ENCODE measurements at regions of chr9 and their contacts with region 1.

Region 1: GRCh38 chr9:113401027-113401792 is at the start of gene ALAD:
- DNase-seq: peak; percentile 100
- ATAC-seq: peak; percentile 99
- H3K4me3 Mint-ChIP-seq: peak within 1 kb of the TSS; percentile 86
- H3K27ac Mint-ChIP-seq: peak within 1 kb of the TSS; percentile 84
- H3K4me1 Mint-ChIP-seq: peaks cover 19% of the 10 kb centered on the region
- H3K27me3 Mint-ChIP-seq: no peaks in the 10 kb centered on the region
- total RNA-seq, gene ALAD: 20.2 to 30.1 TPM

Region 2: GRCh38 chr9:113150670-113151611 is 250.3 kb before region 1 on chr9 and contains the start of gene SLC31A2:
- CTCF ChIA-PET with region 1: no interaction called
- POLR2A ChIA-PET with region 1: no interaction called
- intact Hi-C with region 1: loop called in 1 of 2 experiments (anchors 2 kb)
- DNase-seq: peak; percentile 95
- ATAC-seq: peak; percentile 97
- H3K4me3 Mint-ChIP-seq: peak within 1 kb of the TSS; percentile 73
- H3K27ac Mint-ChIP-seq: peak within 1 kb of the TSS; percentile 51
- H3K4me1 Mint-ChIP-seq: peaks cover 29% of the 10 kb centered on the region
- H3K27me3 Mint-ChIP-seq: peaks cover 2% of the 10 kb centered on the region
- total RNA-seq, gene SLC31A2: 2.7 to 3.2 TPM

Region 3: GRCh38 chr9:113309204-113309813 is 91.9 kb before region 1 on chr9:
- CTCF ChIA-PET with region 1: interaction called, 5 read pairs
- POLR2A ChIA-PET with region 1: no interaction called
- intact Hi-C with region 1: loop called in 1 of 2 experiments (anchors 2 kb)
- DNase-seq: peak; percentile 42
- ATAC-seq: peak; percentile 65
- H3K4me3 Mint-ChIP-seq: no peak overlapping the region
- H3K27ac Mint-ChIP-seq: no peak overlapping the region
- H3K4me1 Mint-ChIP-seq: no peaks in the 10 kb centered on the region
- H3K27me3 Mint-ChIP-seq: no peaks in the 10 kb centered on the region

Region 4: GRCh38 chr9:113340017-113340699 is 61.1 kb before region 1 on chr9 and contains the start of gene WDR31:
- CTCF ChIA-PET with region 1: interaction called, 8 read pairs
- POLR2A ChIA-PET with region 1: no interaction called
- intact Hi-C with region 1: loop called in 1 of 2 experiments (anchors 1 kb)
- DNase-seq: peak; percentile 88
- ATAC-seq: peak; percentile 96
- H3K4me3 Mint-ChIP-seq: peak within 1 kb of the TSS; percentile 71
- H3K27ac Mint-ChIP-seq: peak within 1 kb of the TSS; percentile 43
- H3K4me1 Mint-ChIP-seq: peaks cover 27% of the 10 kb centered on the region
- H3K27me3 Mint-ChIP-seq: no peaks in the 10 kb centered on the region
- total RNA-seq, gene WDR31: 1.7 to 2.1 TPM

Region 5: GRCh38 chr9:113349445-113350094 is 51.6 kb before region 1 on chr9 and contains the start of gene BSPRY:
- CTCF ChIA-PET with region 1: interaction called, 5 read pairs
- POLR2A ChIA-PET with region 1: no interaction called
- intact Hi-C with region 1: loop called in 1 of 2 experiments (anchors 1 kb)
- DNase-seq: peak; percentile 48
- ATAC-seq: peak; percentile 42
- H3K4me3 Mint-ChIP-seq: peak within 1 kb of the TSS; percentile 75
- H3K27ac Mint-ChIP-seq: peak within 1 kb of the TSS; percentile 71
- H3K4me1 Mint-ChIP-seq: peaks cover 48% of the 10 kb centered on the region
- H3K27me3 Mint-ChIP-seq: peaks cover 37% of the 10 kb centered on the region
- total RNA-seq, gene BSPRY: 5.7 to 6.6 TPM

Region 6: DNA sequence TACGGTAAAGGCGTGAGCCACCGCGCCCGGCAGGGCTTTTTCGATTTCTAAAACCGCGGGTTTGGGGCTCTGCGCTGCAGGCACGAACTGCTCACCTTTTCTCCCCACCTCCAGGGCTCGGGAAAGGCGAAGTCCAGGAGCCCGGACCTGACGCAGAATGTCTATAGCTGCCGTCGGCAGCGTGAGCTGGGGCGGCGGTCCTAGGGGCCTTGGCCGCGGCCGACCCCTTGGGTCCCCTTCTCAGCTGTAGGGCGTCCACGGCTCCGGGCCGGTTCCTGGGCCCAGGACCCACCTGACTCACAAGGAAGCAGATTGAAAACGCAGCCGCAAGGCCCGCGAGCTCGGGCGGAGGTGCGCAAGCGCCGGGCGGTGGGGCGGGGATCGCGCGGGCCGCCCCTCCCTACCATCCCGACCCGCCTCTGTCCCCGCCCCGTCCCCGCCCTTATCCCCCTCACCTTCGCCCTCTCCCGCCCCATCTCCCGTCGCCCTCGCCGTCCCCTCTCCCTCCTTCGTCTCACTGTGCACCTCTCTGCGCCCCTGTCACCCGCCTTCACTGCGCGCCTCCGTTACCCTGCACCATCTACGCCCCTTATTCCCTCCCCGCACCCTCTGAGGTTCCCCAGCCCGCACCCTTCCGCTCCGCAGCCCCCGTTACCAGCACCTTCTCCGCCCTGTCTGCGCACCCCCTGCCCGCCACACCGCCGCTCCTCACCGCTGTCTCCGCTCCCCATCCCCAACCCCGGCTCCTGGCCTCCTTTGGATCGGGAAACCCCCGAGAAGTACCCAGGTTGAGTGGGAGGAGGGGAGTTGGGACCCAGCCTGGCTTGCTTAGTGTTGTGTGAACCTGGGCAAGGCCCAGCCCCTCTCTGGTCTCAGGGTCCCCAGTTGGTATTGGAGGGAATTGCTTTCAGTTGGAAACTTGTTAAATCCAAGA is 24.3 kb before region 1 on chr9 and contains the start of gene HDHD3:
- CTCF ChIA-PET with region 1: interaction called, 4 read pairs
- POLR2A ChIA-PET with region 1: no interaction called
- intact Hi-C with region 1: loop called (anchors 1 kb)
- DNase-seq: peak; percentile 90
- ATAC-seq: peak; percentile 89
- H3K4me3 Mint-ChIP-seq: peak within 1 kb of the TSS; percentile 88
- H3K27ac Mint-ChIP-seq: peak within 1 kb of the TSS; percentile 89
- H3K4me1 Mint-ChIP-seq: peaks cover 17% of the 10 kb centered on the region
- H3K27me3 Mint-ChIP-seq: no peaks in the 10 kb centered on the region
- total RNA-seq, gene HDHD3: 12.7 to 16.5 TPM